Right lobe of liver (tissue), 6 donors: ENCODE measurements at regions of chr15 and their contacts with region 1.

Region 1: GRCh38 chr15:43285609-43286037 is 18.9 kb upstream of the TGM5 start:
- DNase-seq: no peak
- ATAC-seq: peak; percentile 83 to 96 (median 90)
- H3K4me3 ChIP-seq: no peak overlapping the region
- H3K27ac ChIP-seq: no peak overlapping the region
- H3K4me1 ChIP-seq: no peaks in the 10 kb centered on the region
- H3K27me3 ChIP-seq: no peaks in the 10 kb centered on the region
- CTCF ChIP-seq: peak; percentile 72 to 93 (median 76)
- POLR2A ChIP-seq: no peak

Region 2: GRCh38 chr15:42994546-42994945 is 291.1 kb before region 1 on chr15:
- intact Hi-C with region 1: no loop called
- DNase-seq: no peak
- ATAC-seq: no peak
- H3K4me3 ChIP-seq: no peak overlapping the region
- H3K27ac ChIP-seq: no peak overlapping the region
- H3K4me1 ChIP-seq: no peaks in the 10 kb centered on the region
- H3K27me3 ChIP-seq: no peaks in the 10 kb centered on the region
- CTCF ChIP-seq: no peak
- POLR2A ChIP-seq: no peak

Region 3: DNA sequence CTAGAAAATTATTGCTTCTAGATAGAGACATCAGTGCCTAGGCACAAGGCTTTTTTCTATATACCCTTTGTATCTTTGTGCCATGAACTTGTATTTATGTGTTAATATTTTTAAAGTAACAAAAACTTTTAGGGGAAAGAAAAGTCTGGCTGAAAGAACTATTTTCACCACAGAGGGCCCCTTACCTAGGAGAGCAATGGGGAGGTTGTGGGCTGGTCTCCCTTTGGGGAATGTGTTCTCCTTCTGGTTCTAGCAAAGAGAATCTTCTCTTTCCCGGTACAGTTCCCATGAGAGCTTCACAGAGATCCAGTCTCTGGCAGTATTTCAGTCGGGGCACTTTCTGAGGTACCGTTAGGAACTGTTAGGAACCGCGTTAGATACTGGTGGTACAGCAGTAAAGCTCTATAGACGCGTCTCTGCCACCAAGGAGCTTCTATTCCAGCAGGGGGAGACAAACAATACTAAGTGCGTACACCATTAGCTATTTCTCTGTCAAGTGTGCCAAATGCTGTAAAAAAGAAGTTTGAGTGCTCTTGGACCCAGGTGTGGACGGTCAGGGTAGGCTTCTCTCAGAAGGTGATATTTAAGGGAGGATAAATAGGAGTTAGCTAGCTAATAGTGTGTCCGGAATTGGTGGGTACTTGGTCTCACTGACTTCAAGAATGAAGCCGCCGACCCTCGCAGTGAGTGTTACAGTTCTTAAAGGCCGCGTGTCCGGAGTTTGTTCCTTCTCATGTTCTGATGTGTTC is 60.2 kb before region 1 on chr15:
- intact Hi-C with region 1: loop called (anchors 5 to 10 kb)
- DNase-seq: no peak
- ATAC-seq: peak; percentile 81 to 86 (median 84)
- H3K4me3 ChIP-seq: no peak overlapping the region
- H3K27ac ChIP-seq: no peak overlapping the region
- H3K4me1 ChIP-seq: no peaks in the 10 kb centered on the region
- H3K27me3 ChIP-seq: no peaks in the 10 kb centered on the region
- CTCF ChIP-seq: peak; percentile 63 to 69 (median 65)
- POLR2A ChIP-seq: no peak

Region 4: GRCh38 chr15:43239732-43240491 is 45.7 kb before region 1 on chr15:
- intact Hi-C with region 1: loop called in 1 of 2 experiments (anchors 10 kb)
- DNase-seq: peak in 1 of 3 donors; percentile 13
- ATAC-seq: no peak
- H3K4me3 ChIP-seq: no peak overlapping the region
- H3K27ac ChIP-seq: no peak overlapping the region
- H3K4me1 ChIP-seq: no peaks in the 10 kb centered on the region
- H3K27me3 ChIP-seq: no peaks in the 10 kb centered on the region
- CTCF ChIP-seq: no peak
- POLR2A ChIP-seq: no peak